ENCODE measurements at regions of chr22 and their contacts with region 1.

Region 1: DNA sequence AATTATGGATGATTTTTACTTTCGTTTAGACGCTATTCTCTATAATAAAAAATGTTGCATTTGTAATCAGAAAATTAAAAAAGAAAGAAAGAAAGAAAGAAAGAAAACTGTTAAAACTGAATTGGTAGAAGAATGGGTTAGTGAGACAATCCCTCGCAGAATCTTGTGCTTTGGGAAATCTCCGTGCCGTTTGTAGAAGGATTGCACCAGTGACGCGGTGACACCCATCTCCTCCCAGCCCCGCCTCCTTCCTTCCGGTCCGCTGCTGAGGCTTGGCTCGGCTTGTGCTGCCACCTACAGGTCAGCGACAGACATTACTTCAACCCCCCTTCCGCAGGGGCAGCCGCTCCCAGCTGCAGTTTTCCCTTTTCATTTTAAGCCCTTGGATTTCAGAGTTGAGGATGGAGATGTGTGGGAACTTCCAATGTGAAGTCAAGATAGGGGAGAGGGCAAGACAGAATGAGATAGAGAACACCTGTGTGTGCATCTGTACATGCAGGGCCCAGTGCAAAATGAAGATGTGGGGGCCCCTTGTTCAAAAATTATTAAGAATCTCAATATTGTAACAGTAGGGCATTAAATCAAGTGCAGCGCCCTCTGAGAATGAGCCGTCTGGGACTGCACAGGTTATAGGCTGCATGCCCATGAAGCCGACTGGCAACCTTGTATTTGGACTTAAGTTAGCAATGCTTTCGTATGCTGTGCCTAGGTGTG is 41.1 kb downstream of the TST start:
- DNase-seq: peak; percentile 86 to 89 (median 88)
- H3K4me3 ChIP-seq: peak overlapping the region; percentile 41 to 67
- H3K4me3 Mint-ChIP-seq: peak overlapping the region; percentile 88 to 98 (median 96)
- H3K27ac ChIP-seq: peak overlapping the region; percentile 59
- H3K27ac Mint-ChIP-seq: peak overlapping the region; percentile 82 to 99 (median 96)
- H3K4me1 ChIP-seq: peaks cover 4% of the 10 kb centered on the region
- H3K4me1 Mint-ChIP-seq: peaks cover 3 to 14% (median 8%) of the 10 kb centered on the region in 4 donors
- H3K27me3 ChIP-seq: no peaks in the 10 kb centered on the region
- H3K27me3 Mint-ChIP-seq: peaks cover 3 to 5% of the 10 kb centered on the region in 2 donors

Region 2: DNA sequence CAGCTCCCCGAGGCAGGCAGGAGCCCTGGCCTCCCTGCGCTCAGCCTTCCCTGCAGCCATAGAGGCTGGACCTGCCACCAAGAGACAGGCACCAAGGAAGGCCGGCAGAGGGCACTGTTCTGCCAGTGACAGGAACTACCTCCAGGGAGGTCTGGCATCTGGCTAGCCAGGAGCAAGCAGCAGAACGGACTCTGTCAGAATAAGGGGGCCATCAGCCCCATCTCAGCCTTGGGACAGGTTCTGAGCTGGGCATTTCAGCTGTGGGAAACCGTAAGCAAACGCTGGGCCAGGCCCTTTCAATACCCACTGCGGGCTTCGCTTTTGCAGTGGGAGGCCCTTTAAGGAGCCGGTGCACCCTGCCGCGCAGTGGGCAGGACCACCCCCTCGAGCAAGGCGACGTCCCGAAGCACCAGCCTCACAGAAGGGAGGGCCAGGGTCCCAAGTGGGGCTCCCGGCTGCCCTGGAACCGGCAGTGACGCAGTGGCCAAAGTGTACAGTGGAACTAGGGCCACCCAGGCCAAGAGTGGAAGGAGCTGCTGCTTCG is 220.4 kb before region 1 on chr22:
- CTCF ChIA-PET with region 1: interaction called, 25 read pairs
- POLR2A ChIA-PET with region 1: interaction called, 4 read pairs
- intact Hi-C with region 1: loop called (anchors 1 kb)
- DNase-seq: peak; percentile 56 to 71 (median 64)
- H3K4me3 ChIP-seq: no peak overlapping the region
- H3K4me3 Mint-ChIP-seq: no peak overlapping the region
- H3K27ac ChIP-seq: no peak overlapping the region
- H3K27ac Mint-ChIP-seq: no peak overlapping the region
- H3K4me1 ChIP-seq: peaks cover 5% of the 10 kb centered on the region
- H3K4me1 Mint-ChIP-seq: peaks cover 2 to 13% (median 5%) of the 10 kb centered on the region in 4 donors
- H3K27me3 ChIP-seq: peaks cover 4% of the 10 kb centered on the region
- H3K27me3 Mint-ChIP-seq: peaks cover 6 to 8% of the 10 kb centered on the region in 2 donors

Region 3: GRCh38 chr22:36781656-36782627 is 196.2 kb before region 1 on chr22:
- CTCF ChIA-PET with region 1: interaction called, 42 read pairs
- POLR2A ChIA-PET with region 1: interaction called, 19 read pairs
- intact Hi-C with region 1: loop called (anchors 1 kb)
- DNase-seq: peak; percentile 80 to 86 (median 82)
- H3K4me3 ChIP-seq: no peak overlapping the region
- H3K4me3 Mint-ChIP-seq: peak overlapping the region in 2 of 8 donors; percentile 46 to 75
- H3K27ac ChIP-seq: no peak overlapping the region
- H3K27ac Mint-ChIP-seq: peak overlapping the region; percentile 14 to 86 (median 67)
- H3K4me1 ChIP-seq: peaks cover 12% of the 10 kb centered on the region
- H3K4me1 Mint-ChIP-seq: peaks cover 6 to 24% (median 17%) of the 10 kb centered on the region in 4 donors
- H3K27me3 ChIP-seq: peaks cover 5% of the 10 kb centered on the region
- H3K27me3 Mint-ChIP-seq: peaks cover 3 to 4% of the 10 kb centered on the region in 2 donors

Region 4: GRCh38 chr22:36884349-36885117 is 93.6 kb before region 1 on chr22:
- CTCF ChIA-PET with region 1: interaction called, 9 read pairs
- POLR2A ChIA-PET with region 1: interaction called, 13 read pairs
- intact Hi-C with region 1: no loop called
- DNase-seq: no peak
- H3K4me3 ChIP-seq: no peak overlapping the region
- H3K4me3 Mint-ChIP-seq: no peak overlapping the region
- H3K27ac ChIP-seq: no peak overlapping the region
- H3K27ac Mint-ChIP-seq: no peak overlapping the region
- H3K4me1 ChIP-seq: peaks cover 21% of the 10 kb centered on the region
- H3K4me1 Mint-ChIP-seq: peaks cover 7 to 8% (median 7%) of the 10 kb centered on the region in 4 donors
- H3K27me3 ChIP-seq: no peaks in the 10 kb centered on the region
- H3K27me3 Mint-ChIP-seq: peaks cover 0 to 2% of the 10 kb centered on the region in 2 donors